ENCODE measurements at regions of chr9 and their contacts with region 1.

Region 1: GRCh38 chr9:20760246-20760901 is 76.3 kb downstream of the FOCAD start:
- DNase-seq: no peak
- ATAC-seq: no peak
- H3K4me3 Mint-ChIP-seq: no peak overlapping the region
- H3K27ac Mint-ChIP-seq: no peak overlapping the region
- H3K4me1 Mint-ChIP-seq: no peaks in the 10 kb centered on the region
- H3K27me3 Mint-ChIP-seq: no peaks in the 10 kb centered on the region

Region 2: DNA sequence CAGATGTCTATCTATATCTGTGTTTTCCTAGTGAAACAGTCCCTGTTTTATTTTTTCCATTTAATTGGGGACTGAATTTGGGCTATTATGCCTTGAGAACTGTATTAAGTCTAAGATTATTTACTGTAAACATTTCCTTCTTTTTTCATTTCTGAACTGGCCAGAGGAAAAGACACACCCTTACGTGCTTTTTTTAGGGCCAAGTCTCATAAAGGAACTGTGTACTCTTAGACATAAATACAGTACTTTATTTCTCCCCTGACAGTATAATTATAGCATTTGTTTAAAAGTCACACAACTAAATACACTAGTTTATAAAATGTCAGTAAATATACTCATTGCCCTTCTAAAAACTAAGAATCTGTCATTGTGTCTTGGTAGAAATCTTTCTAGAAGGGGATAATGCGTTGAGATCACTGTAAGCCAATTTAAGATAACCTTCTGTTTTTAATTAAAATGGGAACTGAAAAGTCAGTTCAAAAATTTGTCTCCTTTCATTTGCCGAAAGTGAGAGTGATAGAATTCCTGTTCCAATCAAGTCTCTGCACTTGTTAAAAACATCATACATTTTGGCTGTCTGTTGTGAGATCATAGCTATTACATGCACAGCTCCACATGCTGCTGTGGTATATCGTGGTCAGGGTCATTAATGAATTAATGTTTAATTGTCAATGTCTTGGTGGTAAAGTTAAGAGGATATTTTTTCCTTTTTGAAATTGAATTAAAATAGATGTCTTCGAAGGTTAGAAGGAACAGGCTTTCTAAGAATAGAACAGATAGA is 55.7 kb after region 1 on chr9:
- CTCF ChIA-PET with region 1: interaction called, 4 read pairs
- POLR2A ChIA-PET with region 1: no interaction called
- intact Hi-C with region 1: loop called in 1 of 2 experiments (anchors 5 kb)
- DNase-seq: no peak
- ATAC-seq: no peak
- H3K4me3 Mint-ChIP-seq: no peak overlapping the region
- H3K27ac Mint-ChIP-seq: no peak overlapping the region
- H3K4me1 Mint-ChIP-seq: no peaks in the 10 kb centered on the region
- H3K27me3 Mint-ChIP-seq: no peaks in the 10 kb centered on the region

Region 3: DNA sequence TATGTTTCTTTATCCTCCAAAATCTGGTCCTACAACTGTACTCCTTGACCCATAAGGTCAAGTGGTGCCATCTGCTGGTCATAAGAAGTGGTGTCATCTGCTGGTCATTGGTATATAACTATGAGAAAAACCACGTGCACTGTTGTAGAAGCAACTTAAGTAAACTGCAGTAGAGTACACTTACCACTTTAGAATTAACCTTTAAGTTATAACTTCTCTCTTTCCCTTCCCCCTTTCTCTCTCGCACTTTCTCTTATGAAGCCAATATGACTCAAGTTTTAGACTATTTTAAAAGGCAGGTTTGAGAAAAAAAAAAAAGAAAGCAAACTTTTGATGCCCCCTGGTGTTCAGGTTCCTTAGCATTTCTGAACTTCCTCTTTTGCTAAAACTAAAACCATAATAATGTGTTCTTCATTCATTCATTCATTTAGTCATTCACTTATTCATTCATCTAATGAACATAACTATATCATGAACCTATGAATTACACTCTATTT is 1029.2 kb after region 1 on chr9:
- CTCF ChIA-PET with region 1: no interaction called
- POLR2A ChIA-PET with region 1: no interaction called
- intact Hi-C with region 1: no loop called
- DNase-seq: peak; percentile 67
- ATAC-seq: peak; percentile 99
- H3K4me3 Mint-ChIP-seq: peak overlapping the region; percentile 60
- H3K27ac Mint-ChIP-seq: peak overlapping the region; percentile 77
- H3K4me1 Mint-ChIP-seq: peaks cover 5% of the 10 kb centered on the region
- H3K27me3 Mint-ChIP-seq: peaks cover 9% of the 10 kb centered on the region